ENCODE measurements at regions of chr1 and their contacts with region 1.

Region 1: GRCh38 chr1:181754103-181754502 is 270.8 kb downstream of the CACNA1E start:
- DNase-seq: no peak
- H3K4me3 ChIP-seq: no peak overlapping the region
- H3K27ac ChIP-seq: no peak overlapping the region
- H3K4me1 ChIP-seq: no peaks in the 10 kb centered on the region
- H3K27me3 ChIP-seq: no peaks in the 10 kb centered on the region
- CTCF ChIP-seq: no peak
- POLR2A ChIP-seq: no peak

Region 2: DNA sequence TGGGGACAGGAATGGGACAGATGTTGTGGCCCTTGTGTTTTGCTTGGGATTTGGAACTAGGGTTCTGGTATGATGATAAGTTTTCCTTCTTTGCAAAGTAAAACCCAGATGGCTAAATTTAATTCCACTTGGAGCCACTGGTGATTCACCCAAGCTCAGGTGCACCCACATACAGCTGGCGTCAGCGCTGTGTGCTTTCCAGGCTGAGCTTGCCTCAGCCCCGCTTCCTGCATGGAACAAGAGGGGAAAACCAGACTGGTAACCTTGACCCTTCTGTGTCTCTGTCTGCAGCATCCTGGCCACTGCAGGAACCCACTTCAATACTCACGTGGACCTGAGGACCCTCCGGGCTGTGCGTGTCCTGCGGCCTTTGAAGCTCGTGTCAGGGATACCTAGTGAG is 176.6 kb before region 1 on chr1:
- intact Hi-C with region 1: no loop called
- DNase-seq: no peak
- H3K4me3 ChIP-seq: no peak overlapping the region
- H3K27ac ChIP-seq: no peak overlapping the region
- H3K4me1 ChIP-seq: no peaks in the 10 kb centered on the region
- H3K27me3 ChIP-seq: no peaks in the 10 kb centered on the region
- CTCF ChIP-seq: no peak
- POLR2A ChIP-seq: no peak

Region 3: DNA sequence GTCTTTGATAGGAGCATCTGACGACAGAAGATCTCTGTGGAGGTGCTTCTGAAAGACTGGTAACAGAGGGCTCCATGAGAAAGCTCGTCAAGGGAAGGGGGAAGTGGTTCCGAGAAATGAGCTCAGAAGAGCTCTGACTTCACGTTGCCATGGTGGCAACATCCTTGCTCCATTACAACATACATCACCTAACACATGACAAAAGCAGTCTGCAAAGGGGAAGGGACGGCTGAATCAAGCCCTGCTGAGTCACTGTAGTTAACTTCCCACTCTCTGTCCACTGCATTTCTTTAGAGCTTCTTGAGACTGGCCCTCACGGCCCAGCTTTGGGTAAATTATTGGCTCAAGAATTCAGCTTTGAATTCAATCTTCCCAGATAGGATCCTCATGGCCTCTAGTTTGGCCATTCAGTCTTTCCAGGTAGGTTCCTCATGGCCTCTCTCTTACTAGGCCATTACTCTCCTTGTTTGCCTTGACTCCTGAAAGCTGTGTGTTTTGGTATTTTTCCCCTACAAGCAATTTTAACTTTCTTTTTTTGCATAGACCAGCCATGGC is 395.4 kb after region 1 on chr1:
- intact Hi-C with region 1: loop called (anchors 5 kb)
- DNase-seq: no peak
- H3K4me3 ChIP-seq: no peak overlapping the region
- H3K27ac ChIP-seq: peak overlapping the region in 1 of 2 donors; percentile 29
- H3K4me1 ChIP-seq: peaks cover under 1 to 4% of the 10 kb centered on the region in 2 donors
- H3K27me3 ChIP-seq: no peaks in the 10 kb centered on the region
- CTCF ChIP-seq: no peak
- POLR2A ChIP-seq: no peak

Region 4: DNA sequence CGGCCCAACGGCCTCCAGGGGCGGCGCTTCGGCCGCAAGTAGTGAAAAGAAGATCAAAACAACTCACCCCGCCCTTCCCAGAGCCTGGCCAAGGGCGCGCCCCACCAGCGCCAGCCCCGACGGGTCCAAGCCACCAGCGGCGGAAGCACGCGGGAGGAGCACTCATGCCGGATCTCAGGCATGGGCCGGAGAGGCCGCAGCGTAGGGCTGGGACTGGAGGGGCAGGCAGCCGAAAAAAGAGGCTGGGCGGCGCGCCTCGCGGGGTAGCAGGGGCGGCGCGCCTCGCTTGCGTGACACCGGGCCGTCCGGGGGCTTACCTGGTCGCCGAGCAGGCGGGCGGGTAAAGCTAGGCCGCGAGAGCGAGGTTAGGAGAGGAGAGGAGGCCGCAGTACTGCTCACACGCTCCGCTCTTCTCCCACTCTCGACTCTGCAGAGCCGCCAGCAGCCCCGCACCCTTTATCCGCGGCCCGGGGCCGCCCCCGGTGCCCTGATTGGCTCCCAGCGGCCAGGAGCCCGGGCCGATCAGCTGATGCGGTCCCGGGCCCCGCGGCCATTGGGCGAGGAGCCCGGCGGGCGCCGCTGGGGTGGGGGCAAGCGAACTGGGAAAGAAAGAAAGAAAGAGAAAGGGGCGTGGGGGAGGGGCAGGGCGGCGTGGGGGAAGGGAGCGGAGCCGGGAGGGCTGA is 637.4 kb after region 1 on chr1 and contains the start of gene GLUL:
- intact Hi-C with region 1: no loop called
- DNase-seq: peak; percentile 93 to 94
- H3K4me3 ChIP-seq: peak within 1 kb of the TSS; percentile 86 to 96 (median 90)
- H3K27ac ChIP-seq: peak within 1 kb of the TSS; percentile 99
- H3K4me1 ChIP-seq: no peaks in the 10 kb centered on the region
- H3K27me3 ChIP-seq: no peaks in the 10 kb centered on the region
- CTCF ChIP-seq: peak in 1 of 3 donors; percentile 14
- POLR2A ChIP-seq: peak; percentile 97
- total RNA-seq, gene GLUL: 1,940 to 10,612 (median 2,824) TPM

Measured in breast epithelium (tissue), 4 donors.